ENCODE measurements at regions of chr2 and their contacts with region 1.

Region 1: GRCh38 chr2:134683561-134684112 is 35.2 kb downstream of the TMEM163 start:
- DNase-seq: peak; percentile 59
- H3K4me3 Mint-ChIP-seq: no peak overlapping the region
- H3K27ac Mint-ChIP-seq: no peak overlapping the region
- H3K4me1 Mint-ChIP-seq: peaks cover 46% of the 10 kb centered on the region
- H3K27me3 Mint-ChIP-seq: peaks cover 9% of the 10 kb centered on the region

Region 2: DNA sequence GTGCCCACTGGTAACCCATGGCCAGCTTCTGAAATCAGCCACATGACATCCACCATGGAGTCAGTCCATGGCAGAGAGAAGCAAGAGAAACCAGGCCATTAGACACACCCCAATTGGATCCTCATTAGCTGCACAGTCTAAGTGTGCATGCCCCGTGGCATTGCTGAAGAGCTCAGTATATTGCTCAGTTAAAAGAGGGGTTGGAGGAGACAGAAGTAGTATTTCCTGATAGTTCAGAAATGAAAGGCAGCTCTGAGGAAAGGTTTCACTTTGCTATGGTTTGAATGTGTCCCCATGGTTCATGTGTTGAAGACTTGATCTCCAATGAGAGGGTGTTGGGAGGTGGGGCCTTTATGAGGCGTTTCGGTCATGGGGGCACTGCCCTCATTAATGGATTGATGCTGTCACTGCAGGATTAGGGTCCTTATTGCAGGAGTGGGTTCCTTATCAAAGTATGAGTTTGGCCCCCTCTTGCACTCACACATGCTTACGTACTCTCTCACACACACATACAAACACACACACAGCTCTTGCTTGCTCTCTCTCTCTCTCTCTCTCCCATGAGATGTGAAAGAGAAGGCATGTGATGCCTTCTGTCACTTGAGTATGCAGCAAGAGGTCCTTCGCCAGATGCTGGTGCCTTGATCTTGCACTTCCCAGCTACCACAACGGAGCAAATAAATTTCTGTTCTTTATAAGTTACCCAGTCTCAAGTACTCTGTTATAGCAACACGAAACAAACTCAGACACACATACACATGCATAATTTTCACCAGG is 22.8 kb before region 1 on chr2:
- CTCF ChIA-PET with region 1: no interaction called
- POLR2A ChIA-PET with region 1: no interaction called
- intact Hi-C with region 1: no loop called
- DNase-seq: no peak
- H3K4me3 Mint-ChIP-seq: no peak overlapping the region
- H3K27ac Mint-ChIP-seq: no peak overlapping the region
- H3K4me1 Mint-ChIP-seq: peaks cover 16% of the 10 kb centered on the region
- H3K27me3 Mint-ChIP-seq: peaks cover 2% of the 10 kb centered on the region

Region 3: GRCh38 chr2:134714228-134714627 is 30.6 kb after region 1 on chr2:
- CTCF ChIA-PET with region 1: interaction called, 3 read pairs
- POLR2A ChIA-PET with region 1: no interaction called
- intact Hi-C with region 1: loop called (anchors 1 kb)
- DNase-seq: no peak
- H3K4me3 Mint-ChIP-seq: no peak overlapping the region
- H3K27ac Mint-ChIP-seq: no peak overlapping the region
- H3K4me1 Mint-ChIP-seq: peaks cover 23% of the 10 kb centered on the region
- H3K27me3 Mint-ChIP-seq: peaks cover 30% of the 10 kb centered on the region

Measured in activated CD4-positive, alpha-beta memory T cell treated with anti-CD3 and anti-CD28 coated beads for 36 hours (primary cell).